WTC11 (cell line): ENCODE measurements at regions of chr18 and their contacts with region 1.

Region 1: DNA sequence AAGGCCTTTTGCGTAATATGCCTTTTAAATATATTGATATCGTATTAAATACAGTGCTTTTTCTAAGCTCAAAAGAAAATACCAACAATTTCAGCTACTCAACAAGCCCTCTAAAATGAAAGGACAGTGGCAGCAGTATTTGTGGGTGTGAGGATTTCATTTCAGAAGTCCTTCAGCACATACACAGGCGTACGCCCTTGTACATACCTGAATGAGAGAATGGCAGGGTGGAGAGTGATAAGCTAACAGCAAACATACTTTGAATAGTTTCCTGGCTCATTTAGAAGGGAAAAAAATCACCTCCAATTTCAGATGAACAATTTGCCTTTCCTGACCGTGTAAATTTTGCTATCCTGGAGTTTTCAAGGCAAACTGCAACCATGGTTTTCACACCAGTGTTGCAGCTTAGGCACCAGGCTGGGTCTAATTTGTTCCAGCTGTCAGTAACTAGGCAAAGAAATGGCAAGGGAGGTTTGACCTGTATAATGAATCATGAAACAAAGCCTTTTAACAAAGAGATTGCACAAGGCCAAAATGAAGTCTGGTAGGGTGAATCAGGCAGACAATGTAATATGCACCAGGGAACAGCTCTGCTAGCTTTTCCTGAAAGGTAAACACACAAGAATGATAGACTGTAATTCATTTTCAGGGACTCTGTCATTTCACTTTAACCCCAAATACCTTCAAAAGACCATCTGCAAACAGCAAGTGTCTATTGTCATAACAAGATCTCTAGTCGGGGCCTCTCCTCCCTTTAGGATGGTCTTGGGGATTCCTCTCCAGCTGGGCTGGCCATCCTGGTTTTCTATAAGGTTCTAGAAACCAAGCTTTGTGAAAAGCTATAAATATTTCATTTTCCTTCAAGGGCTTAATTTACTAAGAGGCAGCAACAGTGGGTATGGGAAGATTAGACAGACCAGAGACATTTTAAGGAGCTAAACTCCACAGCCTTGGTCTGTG is 11.5 kb downstream of the ANKRD29 start:
- DNase-seq: no peak
- ATAC-seq: no peak
- H3K4me3 Mint-ChIP-seq: no peak overlapping the region
- H3K27ac Mint-ChIP-seq: no peak overlapping the region
- H3K4me1 Mint-ChIP-seq: peaks cover 12% of the 10 kb centered on the region
- H3K27me3 Mint-ChIP-seq: no peaks in the 10 kb centered on the region
- CTCF ChIP-seq: no peak

Region 2: DNA sequence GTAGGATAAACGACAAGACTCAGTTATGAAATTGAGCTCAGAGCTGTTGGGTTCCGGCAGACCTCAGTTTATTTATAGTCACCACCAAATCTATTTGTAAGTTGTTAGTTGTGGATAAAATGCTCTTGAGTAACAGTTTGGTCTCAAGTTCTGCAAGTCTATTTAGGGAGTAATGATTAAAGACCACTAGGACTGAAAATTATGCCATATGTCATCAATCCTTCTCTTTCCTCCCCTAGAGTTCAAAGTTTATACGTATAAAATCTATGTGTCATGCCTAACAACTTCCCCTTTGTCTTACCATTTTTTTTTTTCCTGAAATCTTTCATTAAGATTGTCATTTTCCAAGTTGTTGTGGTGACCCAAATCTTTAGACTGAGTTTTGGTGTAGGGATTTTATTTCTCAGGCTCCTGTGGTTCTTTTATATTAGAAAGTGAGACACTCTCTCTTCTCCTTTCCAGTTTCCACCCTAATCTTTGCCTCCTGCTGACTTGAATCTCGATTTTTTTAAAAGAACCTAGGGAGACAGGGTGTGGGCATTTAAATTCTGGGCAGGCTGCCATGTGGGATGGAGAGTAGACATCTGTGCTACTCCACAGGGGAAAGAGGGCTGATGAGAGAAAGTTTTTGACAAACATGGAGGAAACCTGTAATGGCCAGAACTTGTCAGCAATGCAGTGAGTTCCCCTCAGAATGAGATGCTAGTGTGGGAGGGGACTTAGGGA is 89.0 kb after region 1 on chr18:
- CTCF ChIA-PET with region 1: no interaction called
- POLR2A ChIA-PET with region 1: no interaction called
- DNase-seq: no peak
- ATAC-seq: no peak
- H3K4me3 Mint-ChIP-seq: no peak overlapping the region
- H3K27ac Mint-ChIP-seq: no peak overlapping the region
- H3K4me1 Mint-ChIP-seq: peaks cover 16% of the 10 kb centered on the region
- H3K27me3 Mint-ChIP-seq: peaks cover 2% of the 10 kb centered on the region; the same call in 1 of the 2 replicates
- CTCF ChIP-seq: no peak

Region 3: GRCh38 chr18:23982155-23983079 is 331.2 kb after region 1 on chr18:
- CTCF ChIA-PET with region 1: no interaction called
- POLR2A ChIA-PET with region 1: interaction called, 10 read pairs
- DNase-seq: no peak
- ATAC-seq: peak; percentile 32; the same call in 1 of the 2 replicates
- H3K4me3 Mint-ChIP-seq: no peak overlapping the region
- H3K27ac Mint-ChIP-seq: no peak overlapping the region
- H3K4me1 Mint-ChIP-seq: peaks cover 17% of the 10 kb centered on the region
- H3K27me3 Mint-ChIP-seq: no peaks in the 10 kb centered on the region; the same call in 1 of the 2 replicates
- CTCF ChIP-seq: no peak